PC-9 (cell line): ENCODE measurements at regions of chr12 and their contacts with region 1.

Region 1: DNA sequence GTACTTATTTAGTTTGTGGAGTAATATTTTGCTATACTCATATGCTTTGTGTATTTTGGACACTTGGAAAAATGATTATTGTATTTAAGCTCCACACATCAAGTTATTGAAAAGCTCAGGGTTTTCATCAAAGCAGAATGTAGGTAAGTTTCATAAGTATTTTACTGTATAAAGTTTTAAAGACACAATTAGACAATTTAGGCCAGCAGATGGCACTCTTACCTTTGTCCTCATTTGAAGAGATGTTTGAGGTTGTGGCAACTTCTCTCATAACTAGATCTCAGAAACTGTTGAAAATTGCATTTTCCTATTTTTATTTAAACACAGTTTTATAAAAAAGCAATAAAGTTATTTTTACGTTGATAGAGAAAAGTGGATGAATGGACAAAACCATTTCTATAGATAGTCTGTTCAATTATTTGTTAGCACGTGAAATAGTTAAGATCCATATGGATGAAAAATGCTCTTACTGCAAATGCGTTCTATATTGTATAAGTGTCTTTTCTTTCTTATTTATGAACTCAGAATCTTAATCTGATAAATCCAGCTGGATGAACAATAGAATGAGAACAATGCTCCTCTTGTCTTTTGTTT is 300.0 kb downstream of the AEBP2 start:
- DNase-seq: peak; percentile 23 to 36
- H3K4me3 ChIP-seq: no peak overlapping the region
- H3K27ac ChIP-seq: no peak overlapping the region
- H3K4me1 ChIP-seq: no peaks in the 10 kb centered on the region
- H3K27me3 ChIP-seq: no peaks in the 10 kb centered on the region
- CTCF ChIP-seq: peak; percentile 76

Region 2: GRCh38 chr12:20220339-20220738 is 481.1 kb after region 1 on chr12:
- CTCF ChIA-PET with region 1: no interaction called
- POLR2A ChIA-PET with region 1: no interaction called
- intact Hi-C with region 1: loop called (anchors 1 kb)
- DNase-seq: no peak
- H3K4me3 ChIP-seq: no peak overlapping the region
- H3K27ac ChIP-seq: no peak overlapping the region
- H3K4me1 ChIP-seq: no peaks in the 10 kb centered on the region
- H3K27me3 ChIP-seq: no peaks in the 10 kb centered on the region
- CTCF ChIP-seq: peak; percentile 38; the same call in 1 of the 2 replicates